Heart left ventricle (tissue), 16 donors: ENCODE measurements at regions of chr18 and their contacts with region 1.

Region 1: GRCh38 chr18:37419272-37419671 is 146.3 kb downstream of the CELF4 start:
- DNase-seq: no peak
- ATAC-seq: no peak
- H3K4me3 ChIP-seq: no peak overlapping the region
- H3K27ac ChIP-seq: no peak overlapping the region
- H3K4me1 ChIP-seq: no peaks in the 10 kb centered on the region
- H3K27me3 ChIP-seq: no peaks in the 10 kb centered on the region
- CTCF ChIP-seq: no peak
- POLR2A ChIP-seq: no peak

Region 2: GRCh38 chr18:37368110-37368954 is 50.9 kb before region 1 on chr18:
- intact Hi-C with region 1: loop called in 1 of 10 experiments (anchors 5 kb)
- DNase-seq: no peak
- ATAC-seq: no peak
- H3K4me3 ChIP-seq: no peak overlapping the region
- H3K27ac ChIP-seq: no peak overlapping the region
- H3K4me1 ChIP-seq: peaks cover 0 to 12% (median 0%) of the 10 kb centered on the region in 12 donors
- H3K27me3 ChIP-seq: peaks cover 0 to 33% (median 0%) of the 10 kb centered on the region in 9 donors
- CTCF ChIP-seq: no peak
- POLR2A ChIP-seq: no peak